AG04450 (cell line): ENCODE measurements at regions of chr11 and their contacts with region 1.

Region 1: GRCh38 chr11:114340311-114341131 is 44.3 kb downstream of the NNMT start:
- DNase-seq: peak; percentile 66
- H3K4me3 ChIP-seq: no peak overlapping the region
- H3K27ac ChIP-seq: no peak overlapping the region
- H3K27me3 ChIP-seq: no peaks in the 10 kb centered on the region
- CTCF ChIP-seq: peak; percentile 88

Region 2: GRCh38 chr11:114228435-114229411 is 111.8 kb before region 1 on chr11:
- CTCF ChIA-PET with region 1: no interaction called
- POLR2A ChIA-PET with region 1: no interaction called
- DNase-seq: no peak
- H3K4me3 ChIP-seq: no peak overlapping the region
- H3K27ac ChIP-seq: no peak overlapping the region
- H3K27me3 ChIP-seq: peaks cover 7% of the 10 kb centered on the region
- CTCF ChIP-seq: no peak

Region 3: DNA sequence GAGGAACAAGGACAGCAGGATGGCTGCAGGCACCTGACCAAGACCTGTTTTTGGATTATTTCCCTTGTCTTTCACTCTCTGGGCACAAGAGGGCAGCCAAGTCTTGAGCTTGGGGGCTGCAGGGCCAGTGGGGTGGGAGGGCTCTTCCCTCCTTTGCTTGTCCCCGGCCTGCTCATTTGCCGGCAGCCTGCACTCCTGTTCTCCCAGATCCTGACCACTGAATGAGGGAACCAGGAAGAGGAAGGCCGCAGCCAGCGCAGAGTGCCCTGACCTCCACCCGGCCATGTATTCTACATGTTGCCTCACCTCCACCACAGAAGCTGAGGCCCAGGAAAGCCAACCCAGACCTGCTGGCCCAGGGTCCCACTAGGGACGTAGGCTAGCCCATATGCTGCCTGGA is 59.8 kb before region 1 on chr11:
- CTCF ChIA-PET with region 1: interaction called, 16 read pairs
- POLR2A ChIA-PET with region 1: no interaction called
- DNase-seq: peak; percentile 65
- H3K4me3 ChIP-seq: no peak overlapping the region
- H3K27ac ChIP-seq: no peak overlapping the region
- H3K27me3 ChIP-seq: peaks cover 7% of the 10 kb centered on the region
- CTCF ChIP-seq: peak; percentile 82

Region 4: GRCh38 chr11:114301088-114301487 is 39.4 kb before region 1 on chr11:
- CTCF ChIA-PET with region 1: no interaction called
- POLR2A ChIA-PET with region 1: no interaction called
- DNase-seq: no peak
- H3K4me3 ChIP-seq: no peak overlapping the region
- H3K27ac ChIP-seq: no peak overlapping the region
- H3K27me3 ChIP-seq: no peaks in the 10 kb centered on the region
- CTCF ChIP-seq: no peak

Region 5: DNA sequence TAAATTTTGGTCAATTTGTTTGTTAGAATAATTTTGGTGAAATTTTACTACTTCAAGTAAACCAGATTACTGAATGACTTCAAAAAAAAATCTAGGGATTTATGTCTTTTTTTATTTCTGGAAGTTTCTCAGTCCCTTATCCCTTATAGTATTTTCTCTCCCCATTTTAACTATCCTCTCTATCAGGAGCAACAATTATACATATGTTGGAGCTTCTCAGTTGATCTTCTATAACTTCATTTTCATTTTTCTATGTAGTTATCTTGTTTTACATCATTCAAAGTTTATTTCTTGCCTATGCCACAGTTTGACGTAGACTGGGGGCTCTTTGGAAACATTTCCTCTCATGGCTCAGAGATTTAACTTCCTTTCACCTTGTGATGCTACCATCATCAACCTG is 10.1 kb before region 1 on chr11:
- CTCF ChIA-PET with region 1: interaction called, 12 read pairs
- POLR2A ChIA-PET with region 1: no interaction called
- DNase-seq: no peak
- H3K4me3 ChIP-seq: no peak overlapping the region
- H3K27ac ChIP-seq: no peak overlapping the region
- H3K27me3 ChIP-seq: peaks cover 2% of the 10 kb centered on the region
- CTCF ChIP-seq: no peak

Region 6: DNA sequence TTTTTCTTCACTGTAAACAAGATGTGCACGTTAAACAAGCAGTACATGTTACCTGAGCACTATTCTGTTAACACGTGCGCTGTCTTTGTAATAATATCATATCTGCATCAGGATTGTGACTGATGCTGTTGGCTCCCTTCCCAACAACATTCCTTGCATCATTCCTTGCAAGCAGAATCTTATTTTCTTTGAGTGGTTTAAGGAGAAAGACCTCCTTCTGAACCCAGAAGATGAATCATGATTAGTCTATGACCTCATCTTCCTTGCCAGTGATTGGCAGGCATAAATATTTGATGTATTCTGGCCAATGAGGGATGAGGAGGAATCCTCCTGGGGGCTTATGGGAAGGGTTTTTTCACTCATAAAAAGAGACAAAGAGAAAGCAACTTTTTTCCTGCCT is 13.6 kb after region 1 on chr11:
- CTCF ChIA-PET with region 1: interaction called, 13 read pairs
- POLR2A ChIA-PET with region 1: no interaction called
- DNase-seq: peak; percentile 62
- H3K4me3 ChIP-seq: no peak overlapping the region
- H3K27ac ChIP-seq: no peak overlapping the region
- H3K27me3 ChIP-seq: no peaks in the 10 kb centered on the region
- CTCF ChIP-seq: no peak

Region 7: DNA sequence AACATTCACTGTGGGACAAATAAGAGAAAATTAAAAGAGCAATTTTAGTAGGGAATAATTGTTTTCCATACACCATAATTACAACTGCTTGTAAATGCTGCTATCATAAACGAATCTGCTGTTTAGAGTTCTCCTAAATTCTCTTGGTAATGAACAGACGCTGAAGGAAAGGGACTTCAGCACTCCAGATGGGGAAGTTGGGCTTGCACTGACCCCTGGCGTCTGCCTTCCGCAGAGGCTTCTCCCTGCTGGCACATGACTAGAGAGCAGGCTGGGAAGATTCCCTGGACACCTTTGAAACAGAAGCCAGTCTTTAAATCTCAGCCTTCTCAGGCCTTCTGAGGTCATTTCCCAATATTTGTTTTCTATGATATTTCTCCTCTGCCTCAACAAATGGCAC is 421.9 kb after region 1 on chr11:
- CTCF ChIA-PET with region 1: interaction called, 18 read pairs
- POLR2A ChIA-PET with region 1: no interaction called
- DNase-seq: peak; percentile 23
- H3K4me3 ChIP-seq: no peak overlapping the region
- H3K27ac ChIP-seq: no peak overlapping the region
- H3K27me3 ChIP-seq: no peaks in the 10 kb centered on the region
- CTCF ChIP-seq: peak; percentile 84